Activated CD4-positive, alpha-beta memory T cell treated with anti-CD3 and anti-CD28 coated beads for 36 hours (primary cell): ENCODE measurements at regions of chr19 and their contacts with region 1.

Region 1: DNA sequence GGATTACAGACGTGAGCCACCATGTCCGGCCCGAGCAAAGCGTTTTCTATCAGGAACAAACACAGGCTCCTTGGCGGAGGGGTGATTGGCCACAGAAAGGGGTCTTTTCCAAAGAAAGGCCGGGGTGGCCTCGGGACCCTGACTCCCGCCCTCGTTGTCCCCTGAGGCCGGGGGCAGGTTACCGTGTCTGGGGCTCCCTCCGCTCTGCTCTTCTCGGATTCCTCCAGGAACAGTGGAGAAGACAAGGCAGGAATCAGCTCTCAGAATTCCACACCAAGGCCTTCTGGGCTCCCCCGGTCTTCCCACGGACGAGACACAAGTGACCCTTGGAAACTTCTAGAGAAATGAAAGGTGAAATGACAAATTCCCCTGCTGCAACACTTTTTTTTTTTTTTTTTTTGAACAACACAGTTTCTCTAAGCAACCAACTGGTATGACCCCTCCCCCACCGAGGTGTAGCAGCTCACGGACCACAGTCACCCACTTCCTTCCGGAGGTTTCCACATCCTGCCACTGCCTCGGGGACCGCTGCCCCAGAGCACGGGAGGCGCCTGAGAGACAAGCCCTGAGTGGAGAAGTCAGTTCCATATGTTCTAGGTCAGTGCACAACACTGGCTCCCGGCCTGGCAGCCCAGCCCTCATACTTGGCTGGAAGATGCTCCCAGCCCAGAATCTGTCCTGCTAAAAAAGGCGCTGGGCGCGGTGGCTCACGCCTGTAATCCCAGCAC is 11.0 kb downstream of the MOB3A start:
- DNase-seq: peak; percentile 97
- H3K4me3 Mint-ChIP-seq: peak overlapping the region; percentile 99
- H3K27ac Mint-ChIP-seq: peak overlapping the region; percentile 99
- H3K4me1 Mint-ChIP-seq: peaks cover 59% of the 10 kb centered on the region
- H3K27me3 Mint-ChIP-seq: no peaks in the 10 kb centered on the region

Region 2: DNA sequence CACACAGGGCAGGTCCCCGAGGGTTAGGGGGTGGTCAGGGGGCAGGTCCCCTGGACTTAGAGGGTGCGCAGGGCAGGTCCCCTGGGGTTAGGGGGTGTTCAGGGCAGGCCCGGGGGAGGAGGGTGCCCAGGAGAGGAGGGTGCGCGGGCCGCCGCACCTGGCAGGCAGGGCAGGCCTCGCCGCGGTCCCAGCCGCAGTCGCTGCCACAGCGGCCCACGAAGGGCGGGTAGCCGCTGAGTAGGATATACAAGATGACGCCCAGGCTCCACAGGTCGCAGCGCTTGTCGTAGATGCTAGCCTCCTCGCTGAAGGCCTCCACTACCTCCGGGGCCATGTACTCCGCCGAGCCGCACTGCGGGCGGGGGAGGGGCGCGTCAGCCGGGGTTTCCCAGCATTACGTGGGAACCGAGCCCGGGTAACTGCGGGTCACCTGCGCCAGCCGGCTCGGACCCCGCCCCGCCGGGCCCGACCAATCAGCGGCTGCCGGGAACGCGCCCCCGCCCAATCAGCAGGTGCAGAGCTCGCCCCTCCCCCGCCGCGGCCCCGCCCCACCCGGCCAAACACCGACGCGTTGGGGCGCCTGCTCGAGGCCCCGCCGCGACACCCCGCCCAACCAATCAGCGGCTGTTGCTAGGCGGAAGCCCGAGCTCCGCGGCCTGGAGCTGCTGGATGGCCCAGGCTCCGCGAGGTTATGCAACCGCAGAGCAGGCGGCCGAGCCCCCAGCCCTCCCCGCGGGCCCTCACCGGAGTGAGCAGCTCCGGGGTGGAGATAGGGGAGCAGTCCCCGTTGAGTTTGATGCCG is 43.3 kb before region 1 on chr19:
- CTCF ChIA-PET with region 1: interaction called, 3 read pairs
- POLR2A ChIA-PET with region 1: interaction called, 4 read pairs
- intact Hi-C with region 1: loop called (anchors 1 kb)
- DNase-seq: peak; percentile 100
- H3K4me3 Mint-ChIP-seq: peak overlapping the region; percentile 77
- H3K27ac Mint-ChIP-seq: peak overlapping the region; percentile 89
- H3K4me1 Mint-ChIP-seq: peaks cover 25% of the 10 kb centered on the region
- H3K27me3 Mint-ChIP-seq: no peaks in the 10 kb centered on the region

Region 3: GRCh38 chr19:2061495-2062381 is 23.4 kb before region 1 on chr19:
- CTCF ChIA-PET with region 1: no interaction called
- POLR2A ChIA-PET with region 1: interaction called, 9 read pairs
- intact Hi-C with region 1: loop called (anchors 1 kb)
- DNase-seq: peak; percentile 99
- H3K4me3 Mint-ChIP-seq: peak overlapping the region; percentile 86
- H3K27ac Mint-ChIP-seq: peak overlapping the region; percentile 91
- H3K4me1 Mint-ChIP-seq: peaks cover 27% of the 10 kb centered on the region
- H3K27me3 Mint-ChIP-seq: no peaks in the 10 kb centered on the region